ENCODE measurements at regions of chr15 and their contacts with region 1.

Region 1: DNA sequence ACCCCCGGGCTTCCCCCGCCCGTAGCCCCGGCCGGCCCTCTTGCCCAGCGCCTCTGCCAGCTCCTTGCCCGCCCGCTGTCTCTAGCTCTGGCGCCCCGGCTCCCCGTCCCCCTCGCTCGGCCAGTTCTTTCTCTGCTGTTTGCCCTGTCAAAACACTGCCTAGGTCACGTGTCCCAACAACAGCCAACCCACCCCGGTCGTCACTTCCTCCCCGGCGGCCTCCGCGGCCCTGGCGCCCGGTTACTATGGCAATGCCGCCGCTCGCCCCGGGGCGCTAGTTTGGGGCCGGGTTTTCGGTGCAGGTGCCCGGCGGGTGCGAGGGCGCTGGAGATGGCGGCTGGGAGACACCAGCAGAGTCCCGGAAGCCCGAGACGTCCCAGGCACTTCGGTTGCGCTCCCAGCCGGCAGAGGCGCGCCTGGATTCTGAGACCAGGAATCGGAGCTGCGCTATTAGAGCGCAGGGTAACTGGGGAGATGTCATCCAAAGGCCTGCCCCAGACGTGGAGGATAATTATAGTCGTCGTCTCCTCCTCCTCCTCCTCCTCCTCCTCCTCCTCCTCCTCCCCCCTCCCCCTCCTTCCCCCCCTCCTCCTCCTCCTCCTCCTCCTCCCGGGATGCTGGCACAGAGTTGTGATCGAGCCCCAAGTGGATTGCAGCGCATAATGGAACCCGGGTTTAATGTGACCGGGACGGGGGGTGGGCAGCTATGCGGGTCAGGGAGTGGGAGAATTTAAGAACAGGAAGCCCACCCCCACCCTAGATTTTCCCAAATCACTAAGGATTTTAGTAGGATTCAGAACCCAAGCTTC is at the start of gene ATOSA:
- DNase-seq: peak; percentile 83 to 96 (median 90)
- ATAC-seq: peak; percentile 68
- H3K4me3 ChIP-seq: peak within 1 kb of the TSS; percentile 94
- H3K4me3 Mint-ChIP-seq: peak within 1 kb of the TSS; percentile 96
- H3K27ac ChIP-seq: peak within 1 kb of the TSS; percentile 97 to 99
- H3K27ac Mint-ChIP-seq: peak within 1 kb of the TSS; percentile 97
- H3K4me1 ChIP-seq: peaks cover 14% of the 10 kb centered on the region
- H3K4me1 Mint-ChIP-seq: peaks cover 75% of the 10 kb centered on the region
- H3K27me3 ChIP-seq: no peaks in the 10 kb centered on the region
- H3K27me3 Mint-ChIP-seq: no peaks in the 10 kb centered on the region
- CTCF ChIP-seq: no peak
- total RNA-seq, gene ATOSA: 137 TPM

Region 2: GRCh38 chr15:52528991-52529926 is 150.2 kb before region 1 on chr15:
- CTCF ChIA-PET with region 1: no interaction called
- POLR2A ChIA-PET with region 1: no interaction called
- intact Hi-C with region 1: loop called (anchors 2 to 5 kb)
- DNase-seq: peak; percentile 64 to 94 (median 78)
- ATAC-seq: peak; percentile 87
- H3K4me3 ChIP-seq: peak overlapping the region; percentile 75
- H3K4me3 Mint-ChIP-seq: peak overlapping the region; percentile 89
- H3K27ac ChIP-seq: peak overlapping the region; percentile 64 to 88
- H3K27ac Mint-ChIP-seq: peak overlapping the region; percentile 84
- H3K4me1 ChIP-seq: peaks cover 22% of the 10 kb centered on the region
- H3K4me1 Mint-ChIP-seq: peaks cover 32% of the 10 kb centered on the region
- H3K27me3 ChIP-seq: no peaks in the 10 kb centered on the region
- H3K27me3 Mint-ChIP-seq: no peaks in the 10 kb centered on the region
- CTCF ChIP-seq: peak; percentile 15

Region 3: DNA sequence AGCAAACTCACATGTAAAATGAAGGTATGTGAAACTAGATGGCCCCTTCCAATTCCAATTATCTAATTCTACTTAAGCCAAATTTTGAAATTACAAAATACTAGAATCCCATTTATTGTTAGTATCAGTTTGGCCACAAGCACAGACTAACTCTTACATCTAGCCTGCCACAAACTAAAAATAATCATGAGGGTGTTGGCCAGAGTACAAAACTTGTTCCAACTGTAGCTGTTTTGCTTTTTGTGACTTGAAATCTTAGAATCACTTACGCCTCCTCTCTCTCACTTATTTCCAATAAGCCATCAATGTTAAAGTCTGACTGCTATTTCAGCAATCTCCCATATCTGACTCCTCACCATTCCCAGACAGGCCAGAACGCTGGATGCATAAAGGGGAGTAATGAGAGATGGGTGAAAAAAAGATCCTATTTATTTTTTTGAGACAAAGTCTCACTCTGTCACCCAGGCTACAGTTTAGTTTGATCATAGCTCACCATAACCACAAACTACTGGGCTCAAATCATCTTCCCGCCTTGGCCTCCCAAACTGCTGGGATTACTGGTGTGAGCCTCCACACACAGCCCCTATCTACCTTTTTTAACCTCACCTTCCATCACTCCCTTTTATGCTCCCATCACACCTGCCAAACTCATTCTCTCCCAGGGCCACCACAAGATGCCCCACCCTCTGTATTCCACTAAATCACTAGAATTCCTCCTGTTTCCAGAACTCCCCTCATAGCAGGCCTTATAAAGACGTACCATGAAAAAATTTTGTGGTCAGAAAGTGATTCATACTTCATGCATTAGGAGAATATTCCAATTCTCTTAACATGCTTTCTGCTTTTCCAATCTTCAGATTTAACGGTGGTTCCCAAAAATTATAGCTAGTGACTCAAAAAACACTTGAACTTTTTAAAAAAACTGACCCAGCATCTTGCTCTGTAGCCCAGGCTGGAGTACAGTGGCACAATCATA is 36.8 kb before region 1 on chr15:
- CTCF ChIA-PET with region 1: no interaction called
- POLR2A ChIA-PET with region 1: interaction called, 3 read pairs
- intact Hi-C with region 1: loop called in 1 of 2 experiments (anchors 5 kb)
- DNase-seq: no peak
- ATAC-seq: no peak
- H3K4me3 ChIP-seq: no peak overlapping the region
- H3K4me3 Mint-ChIP-seq: no peak overlapping the region
- H3K27ac ChIP-seq: no peak overlapping the region
- H3K27ac Mint-ChIP-seq: peak overlapping the region; percentile 13
- H3K4me1 ChIP-seq: no peaks in the 10 kb centered on the region
- H3K4me1 Mint-ChIP-seq: peaks cover 23% of the 10 kb centered on the region
- H3K27me3 ChIP-seq: no peaks in the 10 kb centered on the region
- H3K27me3 Mint-ChIP-seq: no peaks in the 10 kb centered on the region
- CTCF ChIP-seq: no peak

Region 4: DNA sequence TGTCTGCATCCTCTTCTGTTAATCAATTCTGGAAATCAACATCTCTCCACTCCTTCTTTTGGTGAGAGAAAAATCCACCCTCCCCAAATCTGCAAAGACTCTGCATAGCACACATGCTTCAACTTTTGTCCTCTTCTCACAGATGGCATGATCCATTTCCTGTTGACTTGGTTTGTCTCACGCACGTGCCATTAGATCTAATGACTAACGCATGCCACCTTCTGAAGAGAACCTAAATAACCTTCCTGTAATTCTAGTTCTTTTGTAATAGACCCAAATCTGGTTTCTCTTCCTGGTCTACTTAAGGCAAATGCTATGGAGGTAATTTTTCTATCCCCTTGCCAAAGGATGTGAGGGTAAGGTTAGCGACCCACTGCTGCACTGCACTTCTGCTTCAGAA is 50.7 kb after region 1 on chr15:
- CTCF ChIA-PET with region 1: interaction called, 5 read pairs
- POLR2A ChIA-PET with region 1: interaction called, 11 read pairs
- intact Hi-C with region 1: loop called (anchors 1 to 2 kb)
- DNase-seq: peak in 13 of 14 experiments; percentile 10 to 86 (median 38)
- ATAC-seq: peak; percentile 100
- H3K4me3 ChIP-seq: no peak overlapping the region
- H3K4me3 Mint-ChIP-seq: no peak overlapping the region
- H3K27ac ChIP-seq: no peak overlapping the region
- H3K27ac Mint-ChIP-seq: peak overlapping the region; percentile 57
- H3K4me1 ChIP-seq: peaks cover 16% of the 10 kb centered on the region
- H3K4me1 Mint-ChIP-seq: peaks cover 9% of the 10 kb centered on the region
- H3K27me3 ChIP-seq: no peaks in the 10 kb centered on the region
- H3K27me3 Mint-ChIP-seq: no peaks in the 10 kb centered on the region
- CTCF ChIP-seq: peak; percentile 41

Region 5: DNA sequence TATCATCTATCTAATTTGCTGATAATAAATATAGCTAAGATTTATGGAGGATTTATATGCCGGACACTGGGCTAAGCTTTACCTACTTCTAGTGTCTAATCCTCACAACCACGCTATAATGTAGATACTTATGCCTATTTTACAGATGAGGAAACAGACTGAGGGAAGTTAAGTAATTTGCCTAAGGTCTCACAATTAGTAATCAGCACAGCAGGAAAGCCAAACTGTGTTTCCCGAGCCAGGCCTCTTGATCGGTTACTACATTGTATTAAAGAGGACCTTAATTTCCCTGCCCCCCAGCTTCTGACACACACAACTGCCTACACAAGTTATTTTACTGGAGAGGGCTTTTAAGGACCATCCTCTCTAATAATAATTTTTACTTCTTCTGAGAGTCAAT is 69.8 kb after region 1 on chr15:
- CTCF ChIA-PET with region 1: no interaction called
- POLR2A ChIA-PET with region 1: no interaction called
- intact Hi-C with region 1: no loop called
- DNase-seq: no peak
- ATAC-seq: no peak
- H3K4me3 ChIP-seq: no peak overlapping the region
- H3K4me3 Mint-ChIP-seq: no peak overlapping the region
- H3K27ac ChIP-seq: no peak overlapping the region
- H3K27ac Mint-ChIP-seq: no peak overlapping the region
- H3K4me1 ChIP-seq: no peaks in the 10 kb centered on the region
- H3K4me1 Mint-ChIP-seq: no peaks in the 10 kb centered on the region
- H3K27me3 ChIP-seq: peaks cover 8 to 21% of the 10 kb centered on the region in 2 experiments
- H3K27me3 Mint-ChIP-seq: peaks cover 59% of the 10 kb centered on the region
- CTCF ChIP-seq: no peak